ENCODE measurements at regions of chr3 and their contacts with region 1.

Region 1: GRCh38 chr3:168213920-168214319 is 118.2 kb upstream of the GOLIM4 start:
- DNase-seq: peak; percentile 37
- CTCF ChIP-seq: no peak

Region 2: GRCh38 chr3:168476360-168476980 is 262.6 kb after region 1 on chr3:
- in situ Hi-C with region 1: loop called (anchors 10 kb)
- DNase-seq: no peak
- CTCF ChIP-seq: no peak

Region 3: GRCh38 chr3:168620826-168621225 is 406.9 kb after region 1 on chr3:
- in situ Hi-C with region 1: loop called (anchors 25 kb)
- DNase-seq: no peak
- CTCF ChIP-seq: peak; percentile 64

Region 4: DNA sequence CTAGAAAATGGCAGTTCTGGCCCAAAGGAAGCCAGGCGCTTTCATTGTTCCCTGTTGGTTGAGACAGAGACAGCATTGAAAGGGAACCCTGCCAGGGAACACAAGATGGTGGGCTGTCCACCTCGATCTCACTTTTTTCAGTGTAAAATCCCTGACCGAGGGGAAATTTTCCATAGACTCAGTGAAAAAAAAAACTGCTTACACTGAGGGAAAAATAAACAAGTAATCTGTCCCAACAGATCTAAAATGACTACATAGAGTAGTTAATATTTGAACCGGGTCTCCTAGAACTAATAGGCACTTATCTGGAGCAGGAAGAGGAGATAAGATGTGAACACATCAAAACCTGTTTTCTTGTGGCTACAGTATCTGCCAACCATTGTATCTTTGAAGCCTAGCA is 645.2 kb after region 1 on chr3:
- in situ Hi-C with region 1: loop called (anchors 10 kb)
- DNase-seq: no peak
- CTCF ChIP-seq: no peak

Measured in GM13977 (cell line).